ENCODE measurements at regions of chr17 and their contacts with region 1.

Region 1: DNA sequence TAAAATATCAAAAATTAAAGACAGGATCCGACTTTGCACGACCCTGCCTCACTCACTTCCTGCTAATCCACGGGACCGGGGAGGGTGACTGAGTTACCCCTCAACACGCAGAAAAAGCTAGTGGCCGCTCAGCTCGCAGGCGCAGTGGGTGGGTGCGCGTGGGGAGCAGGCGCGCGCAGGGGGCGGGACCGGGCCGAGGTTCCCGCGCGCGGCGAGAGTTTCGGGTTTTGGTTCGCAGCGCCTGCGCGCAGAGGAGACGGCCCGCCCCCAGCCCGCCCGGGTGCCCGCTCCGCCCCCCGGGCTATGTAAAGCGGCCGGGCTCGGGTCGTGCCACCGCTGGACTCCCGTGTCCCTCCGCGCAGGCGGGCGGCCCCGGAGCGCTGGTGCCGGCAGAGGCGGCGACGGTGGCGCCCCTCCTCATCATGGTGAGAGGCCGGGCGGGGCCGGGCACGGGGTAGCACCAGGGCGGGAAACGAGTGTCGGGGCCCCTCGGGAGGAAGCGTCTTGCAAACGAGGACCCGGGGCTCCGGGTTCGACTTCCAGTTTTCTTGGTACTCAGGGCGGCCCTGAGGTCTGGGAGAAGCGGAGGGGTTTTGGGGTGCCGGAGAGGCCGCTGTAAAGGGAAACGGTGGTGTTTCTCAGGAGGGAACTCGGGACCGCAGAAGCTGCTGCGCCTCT is at the start of gene CNP:
- DNase-seq: peak; percentile 71 to 95
- H3K4me3 ChIP-seq: peak within 1 kb of the TSS; percentile 77 to 81
- H3K27ac ChIP-seq: peak within 1 kb of the TSS; percentile 80 to 82
- H3K4me1 ChIP-seq: peaks cover 0 to 12% of the 10 kb centered on the region in 2 donors
- H3K27me3 ChIP-seq: no peaks in the 10 kb centered on the region
- CTCF ChIP-seq: no peak
- total RNA-seq, gene CNP: 72.9 TPM

Region 2: GRCh38 chr17:41835800-41836549 is 130.6 kb before region 1 on chr17 and contains the start of gene NT5C3B:
- intact Hi-C with region 1: no loop called
- DNase-seq: peak in 1 of 2 donors; percentile 83
- H3K4me3 ChIP-seq: peak within 1 kb of the TSS; percentile 71 to 87
- H3K27ac ChIP-seq: peak within 1 kb of the TSS; percentile 76 to 89
- H3K4me1 ChIP-seq: peaks cover 0 to 7% of the 10 kb centered on the region in 2 donors
- H3K27me3 ChIP-seq: no peaks in the 10 kb centered on the region
- CTCF ChIP-seq: no peak
- total RNA-seq, gene NT5C3B: 36.7 TPM

Region 3: GRCh38 chr17:41864836-41865595 is 101.6 kb before region 1 on chr17 and contains the start of gene KLHL11:
- intact Hi-C with region 1: loop called (anchors 1 kb)
- DNase-seq: peak; percentile 56 to 93
- H3K4me3 ChIP-seq: peak within 1 kb of the TSS; percentile 80 to 99
- H3K27ac ChIP-seq: peak within 1 kb of the TSS; percentile 77 to 92
- H3K4me1 ChIP-seq: peaks cover 3 to 14% of the 10 kb centered on the region in 2 donors
- H3K27me3 ChIP-seq: no peaks in the 10 kb centered on the region
- CTCF ChIP-seq: no peak
- total RNA-seq, gene KLHL11: 8.9 TPM

Region 4: GRCh38 chr17:41918314-41919164 is 48.1 kb before region 1 on chr17 and contains the start of gene ACLY:
- intact Hi-C with region 1: loop called (anchors 2 kb)
- DNase-seq: peak; percentile 91 to 98
- H3K4me3 ChIP-seq: peak within 1 kb of the TSS; percentile 82 to 85
- H3K27ac ChIP-seq: peak within 1 kb of the TSS; percentile 78 to 87
- H3K4me1 ChIP-seq: peaks cover 2 to 22% of the 10 kb centered on the region in 2 donors
- H3K27me3 ChIP-seq: no peaks in the 10 kb centered on the region
- CTCF ChIP-seq: no peak
- total RNA-seq, gene ACLY: 64.4 TPM

Region 5: DNA sequence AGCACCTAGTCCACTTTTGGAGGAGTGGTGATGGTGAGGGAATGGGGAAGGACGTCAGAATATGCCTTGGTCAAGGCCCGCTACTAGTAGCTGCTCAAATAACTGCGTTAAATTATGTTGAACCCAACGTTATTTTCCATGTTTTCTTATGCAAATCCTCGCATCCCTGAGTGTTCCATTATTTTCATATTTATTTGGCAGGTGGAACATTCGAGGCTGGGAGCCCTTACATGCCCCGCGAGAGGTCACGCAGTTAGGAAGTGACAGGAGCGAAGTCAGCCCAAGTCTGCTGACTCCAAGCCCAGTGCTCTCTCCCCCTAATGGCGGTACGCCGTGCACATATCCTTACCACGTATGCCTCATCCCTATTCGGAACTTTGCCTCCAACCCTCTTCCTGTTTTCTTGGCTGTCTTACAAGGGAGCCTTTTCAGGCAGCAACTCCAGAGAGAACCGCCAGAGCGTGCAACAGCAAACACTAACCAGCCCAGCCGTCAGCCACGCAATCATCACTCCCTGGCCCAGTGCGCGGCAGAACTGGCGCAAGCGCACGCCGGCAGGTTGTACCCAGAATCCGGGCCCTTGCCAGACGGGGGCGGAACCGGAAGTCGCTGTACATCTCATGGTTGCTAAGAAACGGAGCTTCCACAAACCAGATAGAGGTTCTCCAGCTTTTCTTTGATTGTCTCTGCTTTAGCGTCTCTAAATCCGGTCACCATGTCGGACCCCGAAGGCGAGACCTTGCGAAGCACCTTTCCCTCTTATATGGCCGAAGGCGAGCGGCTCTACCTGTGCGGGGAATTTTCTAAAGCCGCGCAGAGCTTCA is 36.4 kb before region 1 on chr17 and contains the start of gene ODAD4:
- intact Hi-C with region 1: loop called (anchors 2 kb)
- DNase-seq: peak; percentile 91 to 98
- H3K4me3 ChIP-seq: peak within 1 kb of the TSS; percentile 65 to 67
- H3K27ac ChIP-seq: peak within 1 kb of the TSS; percentile 64 to 79
- H3K4me1 ChIP-seq: peaks cover 0 to 11% of the 10 kb centered on the region in 2 donors
- H3K27me3 ChIP-seq: no peaks in the 10 kb centered on the region
- CTCF ChIP-seq: peak; percentile 43 to 69 (median 54)
- total RNA-seq, gene ODAD4: not detected

Region 6: GRCh38 chr17:41992576-41992975 is 26.0 kb after region 1 on chr17:
- intact Hi-C with region 1: no loop called
- DNase-seq: no peak
- H3K4me3 ChIP-seq: no peak overlapping the region
- H3K27ac ChIP-seq: no peak overlapping the region
- H3K4me1 ChIP-seq: no peaks in the 10 kb centered on the region
- H3K27me3 ChIP-seq: no peaks in the 10 kb centered on the region
- CTCF ChIP-seq: no peak

Region 7: GRCh38 chr17:42019509-42020404 is 53.2 kb after region 1 on chr17 and contains the start of gene NKIRAS2:
- intact Hi-C with region 1: loop called (anchors 2 kb)
- DNase-seq: peak; percentile 78 to 96
- H3K4me3 ChIP-seq: peak within 1 kb of the TSS; percentile 84 to 91
- H3K27ac ChIP-seq: peak within 1 kb of the TSS; percentile 83 to 85
- H3K4me1 ChIP-seq: peaks cover 14 to 31% of the 10 kb centered on the region in 2 donors
- H3K27me3 ChIP-seq: no peaks in the 10 kb centered on the region
- CTCF ChIP-seq: peak; percentile 86 to 98 (median 96)
- total RNA-seq, gene NKIRAS2: 63.6 TPM

Region 8: GRCh38 chr17:42120770-42121769 is 154.5 kb after region 1 on chr17 and contains the start of gene KAT2A:
- intact Hi-C with region 1: loop called (anchors 1 kb)
- DNase-seq: peak in 1 of 2 donors; percentile 87
- H3K4me3 ChIP-seq: peak within 1 kb of the TSS; percentile 87 to 98
- H3K27ac ChIP-seq: no peak within 1 kb of the TSS
- H3K4me1 ChIP-seq: peaks cover 0 to 16% of the 10 kb centered on the region in 2 donors
- H3K27me3 ChIP-seq: no peaks in the 10 kb centered on the region
- CTCF ChIP-seq: no peak
- total RNA-seq, gene KAT2A: 94.3 TPM

Region 9: GRCh38 chr17:42155636-42156045 is 189.0 kb after region 1 on chr17:
- intact Hi-C with region 1: loop called (anchors 1 kb)
- DNase-seq: no peak
- H3K4me3 ChIP-seq: peak overlapping the region; percentile 92 to 96
- H3K27ac ChIP-seq: no peak overlapping the region
- H3K4me1 ChIP-seq: peaks cover 8 to 22% of the 10 kb centered on the region in 2 donors
- H3K27me3 ChIP-seq: no peaks in the 10 kb centered on the region
- CTCF ChIP-seq: no peak